Activated CD8-positive, alpha-beta T cell treated with anti-CD3 and anti-CD28 coated beads for 36 hours (primary cell): ENCODE measurements at regions of chr1 and their contacts with region 1.

Region 1: DNA sequence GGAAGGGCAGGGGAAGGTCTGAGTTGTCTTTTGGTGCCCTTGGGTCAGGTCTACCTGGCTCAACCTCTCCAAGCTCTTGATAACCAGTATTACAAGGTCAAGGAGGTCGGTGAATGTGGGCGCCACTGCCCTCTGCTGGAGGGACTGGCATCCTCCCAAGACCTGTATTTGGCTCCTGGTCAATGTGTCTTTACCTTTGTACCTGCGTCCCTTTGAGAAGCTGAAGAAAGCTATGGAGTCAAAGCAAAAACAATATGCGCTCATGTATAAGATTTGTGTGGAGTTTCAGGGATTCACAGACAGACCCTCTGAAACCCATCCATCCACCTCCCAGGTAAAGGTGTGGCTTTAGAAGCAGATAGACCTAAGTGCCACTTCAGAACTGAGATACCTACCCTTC is 61.8 kb upstream of the NBL1 start:
- DNase-seq: peak; percentile 87
- ATAC-seq: peak; percentile 99
- H3K4me3 Mint-ChIP-seq: no peak overlapping the region
- H3K27ac Mint-ChIP-seq: no peak overlapping the region
- H3K4me1 Mint-ChIP-seq: peaks cover 6% of the 10 kb centered on the region
- H3K27me3 Mint-ChIP-seq: no peaks in the 10 kb centered on the region
- CTCF ChIP-seq: peak; percentile 81

Region 2: DNA sequence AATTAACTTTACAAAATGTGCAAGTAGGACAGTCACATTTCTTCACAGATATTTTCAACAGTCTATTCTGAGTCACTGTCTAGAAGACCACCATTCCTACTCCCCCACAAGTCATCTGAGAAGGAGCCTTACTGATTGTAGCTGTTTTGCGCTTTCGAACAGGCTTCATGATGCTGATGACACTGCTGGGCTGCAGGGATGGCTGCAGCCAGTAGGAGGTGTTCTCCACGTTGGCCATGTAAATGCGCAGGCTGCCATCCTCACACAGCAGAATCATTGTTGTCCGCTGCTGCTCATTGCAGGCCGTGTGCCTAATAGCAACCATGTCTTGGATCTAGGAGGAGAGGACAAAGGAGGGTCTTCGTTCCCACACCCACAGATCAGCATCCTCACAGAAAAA is 429.1 kb before region 1 on chr1:
- CTCF ChIA-PET with region 1: no interaction called
- POLR2A ChIA-PET with region 1: no interaction called
- intact Hi-C with region 1: no loop called
- DNase-seq: no peak
- ATAC-seq: no peak
- H3K4me3 Mint-ChIP-seq: no peak overlapping the region
- H3K27ac Mint-ChIP-seq: no peak overlapping the region
- H3K4me1 Mint-ChIP-seq: no peaks in the 10 kb centered on the region
- H3K27me3 Mint-ChIP-seq: no peaks in the 10 kb centered on the region
- CTCF ChIP-seq: no peak

Region 3: DNA sequence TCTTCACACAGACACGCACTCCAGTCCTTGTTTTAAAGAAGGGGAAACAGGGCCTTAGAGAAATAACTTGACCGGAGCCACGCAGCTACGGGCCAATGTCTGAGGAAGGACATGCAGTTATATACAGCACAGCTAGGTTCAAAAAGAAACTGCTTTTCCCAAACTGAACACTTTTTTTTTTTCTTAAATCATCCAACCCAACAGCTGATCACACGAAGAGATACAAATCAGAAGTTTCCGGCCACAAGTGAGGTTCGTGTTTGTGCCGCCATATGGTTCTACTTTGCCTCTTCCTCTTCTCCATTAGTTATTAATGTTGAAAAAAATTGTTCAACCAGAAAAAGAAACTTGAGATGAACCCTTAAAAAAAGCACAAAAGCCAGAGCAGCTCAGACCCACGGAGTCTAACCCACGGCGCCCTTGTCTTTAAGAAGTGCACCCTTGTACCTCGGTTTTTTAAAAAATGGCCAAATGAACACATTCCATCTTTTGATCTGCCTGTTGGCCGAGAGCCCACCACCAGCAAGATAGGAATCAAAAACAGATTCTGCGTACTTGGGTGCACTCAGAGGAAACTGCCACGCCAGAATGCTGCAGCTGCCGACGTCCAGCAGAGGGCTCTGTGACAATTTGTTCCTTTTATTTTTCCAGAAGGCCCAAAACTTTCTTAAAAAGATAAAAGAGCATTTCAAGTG is 191.3 kb before region 1 on chr1:
- CTCF ChIA-PET with region 1: interaction called, 15 read pairs
- POLR2A ChIA-PET with region 1: no interaction called
- intact Hi-C with region 1: loop called (anchors 5 kb)
- DNase-seq: peak; percentile 73
- ATAC-seq: peak; percentile 61
- H3K4me3 Mint-ChIP-seq: peak overlapping the region; percentile 61
- H3K27ac Mint-ChIP-seq: peak overlapping the region; percentile 92
- H3K4me1 Mint-ChIP-seq: peaks cover 70% of the 10 kb centered on the region
- H3K27me3 Mint-ChIP-seq: no peaks in the 10 kb centered on the region
- CTCF ChIP-seq: peak; percentile 94

Region 4: GRCh38 chr1:19439464-19440171 is 142.7 kb before region 1 on chr1:
- CTCF ChIA-PET with region 1: interaction called, 12 read pairs
- POLR2A ChIA-PET with region 1: no interaction called
- intact Hi-C with region 1: no loop called
- DNase-seq: peak; percentile 59
- ATAC-seq: peak; percentile 29
- H3K4me3 Mint-ChIP-seq: no peak overlapping the region
- H3K27ac Mint-ChIP-seq: peak overlapping the region; percentile 80
- H3K4me1 Mint-ChIP-seq: peaks cover 86% of the 10 kb centered on the region
- H3K27me3 Mint-ChIP-seq: no peaks in the 10 kb centered on the region
- CTCF ChIP-seq: peak; percentile 28

Region 5: GRCh38 chr1:19485362-19486187 is 96.7 kb before region 1 on chr1 and contains the start of gene CAPZB:
- CTCF ChIA-PET with region 1: interaction called, 24 read pairs
- POLR2A ChIA-PET with region 1: interaction called, 3 read pairs
- intact Hi-C with region 1: no loop called
- DNase-seq: peak; percentile 95
- ATAC-seq: peak; percentile 89
- H3K4me3 Mint-ChIP-seq: peak within 1 kb of the TSS; percentile 95
- H3K27ac Mint-ChIP-seq: peak within 1 kb of the TSS; percentile 95
- H3K4me1 Mint-ChIP-seq: peaks cover 59% of the 10 kb centered on the region
- H3K27me3 Mint-ChIP-seq: no peaks in the 10 kb centered on the region
- CTCF ChIP-seq: no peak
- total RNA-seq, gene CAPZB: 335 to 340 TPM

Region 6: DNA sequence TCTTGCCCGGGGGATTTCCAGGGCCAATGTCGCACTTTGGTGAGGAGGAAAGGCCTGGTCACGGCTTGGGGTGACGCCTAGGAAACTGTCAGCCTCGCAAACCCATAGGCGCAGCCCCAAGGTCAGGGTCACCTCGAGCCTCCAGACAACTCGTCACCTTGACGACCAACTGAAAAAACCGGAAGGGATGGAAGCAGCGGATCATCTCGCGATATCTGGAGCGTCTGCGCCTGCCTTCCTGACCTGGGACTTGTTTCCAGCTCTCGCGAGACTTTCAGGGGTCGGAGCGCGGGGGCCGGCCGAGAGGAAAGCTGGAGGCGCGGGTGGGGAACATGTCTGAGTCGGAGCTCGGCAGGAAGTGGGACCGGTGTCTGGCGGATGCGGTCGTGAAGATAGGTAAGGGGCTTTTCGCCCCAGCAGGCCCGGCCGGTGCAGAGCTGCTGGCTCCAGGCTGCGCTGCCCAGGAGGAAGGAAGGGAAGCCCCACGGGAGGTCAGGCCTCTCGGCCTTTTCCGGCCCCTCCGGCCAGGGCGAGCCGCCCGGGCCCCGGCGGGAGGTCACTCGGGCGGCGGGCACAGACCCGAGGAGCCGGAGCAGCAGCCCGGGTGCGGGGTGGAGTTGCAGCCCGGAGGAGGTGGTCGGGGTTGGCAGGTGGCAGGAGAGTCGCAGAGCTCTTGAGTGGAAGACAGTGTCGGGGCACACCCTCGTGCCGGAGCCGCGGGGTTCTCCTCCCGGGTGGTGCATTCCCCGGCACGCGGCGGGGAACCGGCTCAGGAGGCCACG is 14.6 kb after region 1 on chr1:
- CTCF ChIA-PET with region 1: interaction called, 18 read pairs
- POLR2A ChIA-PET with region 1: no interaction called
- intact Hi-C with region 1: no loop called
- DNase-seq: peak; percentile 99
- ATAC-seq: peak; percentile 87
- H3K4me3 Mint-ChIP-seq: peak overlapping the region; percentile 84
- H3K27ac Mint-ChIP-seq: peak overlapping the region; percentile 99
- H3K4me1 Mint-ChIP-seq: peaks cover 42% of the 10 kb centered on the region
- H3K27me3 Mint-ChIP-seq: no peaks in the 10 kb centered on the region
- CTCF ChIP-seq: no peak

Region 7: DNA sequence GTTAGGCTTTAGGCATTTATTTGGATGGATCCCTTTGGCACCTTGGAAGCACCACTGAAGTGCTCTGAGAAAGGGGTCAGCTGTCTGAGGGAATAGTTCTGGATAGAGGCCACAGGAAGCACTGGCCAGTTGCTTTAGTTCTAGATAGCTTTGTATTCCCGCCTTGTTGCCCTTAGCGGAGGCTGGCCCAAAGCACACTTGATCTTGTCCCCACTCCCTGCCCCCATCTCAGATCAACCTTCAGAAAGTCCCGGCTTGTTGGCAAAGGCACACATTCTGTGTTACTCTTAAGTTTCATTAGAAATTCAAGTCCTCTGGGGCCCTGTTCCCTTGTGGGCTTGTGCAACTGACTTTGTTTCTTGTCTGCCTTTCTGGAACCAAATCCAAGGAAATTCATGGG is 46.6 kb after region 1 on chr1:
- CTCF ChIA-PET with region 1: no interaction called
- POLR2A ChIA-PET with region 1: no interaction called
- intact Hi-C with region 1: no loop called
- DNase-seq: no peak
- ATAC-seq: no peak
- H3K4me3 Mint-ChIP-seq: no peak overlapping the region
- H3K27ac Mint-ChIP-seq: no peak overlapping the region
- H3K4me1 Mint-ChIP-seq: no peaks in the 10 kb centered on the region
- H3K27me3 Mint-ChIP-seq: no peaks in the 10 kb centered on the region
- CTCF ChIP-seq: no peak

Region 8: DNA sequence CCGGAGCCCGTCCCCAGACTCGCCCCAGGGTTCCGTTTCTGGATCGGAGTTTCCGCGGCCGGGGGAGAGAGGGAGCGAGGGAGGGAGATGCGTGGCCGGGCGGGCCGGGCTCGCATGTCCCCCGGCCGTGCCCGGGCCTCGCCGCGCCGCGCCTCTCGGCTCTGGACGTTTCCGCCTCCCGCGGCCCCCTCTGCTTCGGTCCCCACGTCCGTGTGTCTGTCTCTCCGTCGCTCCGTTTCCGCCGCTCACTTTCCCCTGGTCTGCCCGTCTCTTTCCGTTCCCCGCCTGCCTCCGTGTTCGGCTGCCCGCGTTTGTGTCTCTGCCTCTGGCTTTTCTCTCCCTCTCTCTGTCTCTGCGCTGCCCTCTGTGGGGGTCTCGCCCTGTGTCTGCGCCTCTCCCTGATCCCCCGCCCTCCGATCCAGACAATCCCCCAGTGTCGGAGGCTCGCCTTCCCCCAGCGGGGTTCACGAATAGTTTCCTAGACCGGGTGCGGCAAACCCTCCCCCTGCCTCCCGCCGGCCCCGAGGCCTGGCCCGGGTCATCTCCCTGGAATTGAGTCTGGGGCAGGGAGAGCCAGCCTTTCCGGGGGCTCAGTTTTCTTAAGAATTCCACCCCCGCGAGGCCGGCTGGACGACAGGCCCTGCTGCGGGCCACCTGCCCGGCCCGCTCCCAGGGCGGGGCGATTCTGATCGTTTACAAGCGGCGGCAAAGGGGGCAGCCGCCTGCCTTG is 62.5 kb after region 1 on chr1:
- CTCF ChIA-PET with region 1: no interaction called
- POLR2A ChIA-PET with region 1: no interaction called
- intact Hi-C with region 1: no loop called
- DNase-seq: peak; percentile 81
- ATAC-seq: peak; percentile 53
- H3K4me3 Mint-ChIP-seq: peak overlapping the region; percentile 83
- H3K27ac Mint-ChIP-seq: peak overlapping the region; percentile 69
- H3K4me1 Mint-ChIP-seq: peaks cover 28% of the 10 kb centered on the region
- H3K27me3 Mint-ChIP-seq: peaks cover 10% of the 10 kb centered on the region
- CTCF ChIP-seq: no peak